Testis (tissue), 5 donors: ENCODE measurements at regions of chr14 and their contacts with region 1.

Region 1: DNA sequence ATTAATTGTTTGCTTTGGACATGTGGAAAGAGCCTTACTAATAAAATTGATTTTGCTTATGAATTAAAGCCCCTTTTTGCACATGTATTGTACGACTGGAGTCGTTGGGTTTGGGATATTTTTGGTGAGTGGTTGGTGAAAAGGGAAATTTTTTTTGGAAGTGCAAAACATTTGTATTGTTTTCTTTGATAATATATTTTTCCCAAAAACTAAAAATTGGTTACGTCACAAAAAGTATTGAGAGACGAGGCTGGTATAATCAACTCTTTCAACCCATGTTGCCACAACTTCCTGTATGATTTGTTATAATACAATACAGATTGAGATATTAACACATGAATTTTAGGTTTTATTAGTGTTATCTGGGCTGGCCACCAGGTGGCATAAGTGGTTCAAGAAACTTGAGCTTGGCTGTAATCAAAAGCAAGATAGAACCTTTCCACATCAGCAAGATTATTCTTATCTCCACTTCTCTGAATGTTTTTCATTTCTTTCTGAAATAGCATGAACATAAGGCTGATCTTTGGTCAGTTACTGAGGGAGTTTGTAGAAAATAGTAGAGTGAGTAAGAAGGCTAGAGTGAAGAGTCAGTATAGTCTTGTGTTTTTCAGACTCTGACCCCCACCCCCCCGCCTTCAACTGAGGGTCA is 8.7 kb downstream of the NGDN start:
- DNase-seq: peak; percentile 68
- H3K4me3 ChIP-seq: no peak overlapping the region
- H3K27ac ChIP-seq: no peak overlapping the region
- H3K4me1 ChIP-seq: no peaks in the 10 kb centered on the region
- H3K27me3 ChIP-seq: no peaks in the 10 kb centered on the region
- CTCF ChIP-seq: peak; percentile 73 to 83 (median 73)
- POLR2A ChIP-seq: no peak

Region 2: DNA sequence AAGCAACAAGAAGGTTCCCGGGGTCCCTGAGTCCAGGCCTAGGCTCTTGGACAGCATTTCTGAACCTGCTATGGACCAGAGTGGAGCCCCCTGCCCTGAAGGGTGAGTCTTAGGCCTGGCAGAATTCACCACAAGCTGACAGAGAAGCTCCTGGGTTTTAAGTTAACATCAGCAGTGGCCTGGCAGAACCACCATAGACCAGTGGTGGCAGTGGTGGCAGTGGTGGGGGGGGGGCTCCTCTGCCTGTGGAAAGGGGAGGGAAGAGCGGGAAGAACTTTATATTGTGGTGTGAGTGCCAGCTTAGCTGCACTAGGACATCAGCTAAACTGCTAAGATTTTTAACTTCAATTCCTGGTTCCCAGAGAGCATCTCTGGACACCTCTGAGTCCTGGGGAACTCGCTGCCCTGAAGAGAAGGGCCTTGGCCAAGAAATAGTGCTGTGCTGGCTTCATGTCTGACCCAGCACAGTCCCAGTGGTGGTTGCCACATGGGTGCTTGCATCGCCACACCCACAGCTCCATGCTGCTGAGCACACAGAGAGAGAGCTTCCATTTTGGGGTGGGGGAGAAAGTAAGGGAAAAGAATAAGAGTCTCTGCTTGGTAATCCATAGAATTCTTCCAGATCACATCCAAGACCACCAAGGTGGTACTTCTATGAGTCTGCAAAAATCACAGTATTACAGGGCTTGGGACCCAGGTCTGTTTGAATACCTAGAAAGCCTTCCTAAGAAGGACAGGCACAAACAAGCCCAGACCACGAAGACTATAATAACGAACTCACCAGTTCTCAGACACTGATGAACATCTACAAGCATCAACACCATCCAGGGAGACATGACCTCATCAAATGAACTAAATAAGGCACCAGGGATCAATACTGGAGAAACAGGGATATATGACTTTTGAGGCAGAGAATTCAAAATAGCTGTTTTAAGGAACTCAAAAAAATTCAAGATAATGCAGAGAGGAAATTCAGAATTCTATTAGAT is 260.9 kb before region 1 on chr14:
- intact Hi-C with region 1: no loop called
- DNase-seq: no peak
- H3K4me3 ChIP-seq: no peak overlapping the region
- H3K27ac ChIP-seq: no peak overlapping the region
- H3K4me1 ChIP-seq: no peaks in the 10 kb centered on the region
- H3K27me3 ChIP-seq: no peaks in the 10 kb centered on the region
- CTCF ChIP-seq: no peak
- POLR2A ChIP-seq: no peak

Region 3: GRCh38 chr14:23562268-23563203 is 84.3 kb after region 1 on chr14:
- intact Hi-C with region 1: loop called (anchors 5 kb)
- DNase-seq: peak; percentile 58
- H3K4me3 ChIP-seq: no peak overlapping the region
- H3K27ac ChIP-seq: no peak overlapping the region
- H3K4me1 ChIP-seq: peaks cover 4% of the 10 kb centered on the region
- H3K27me3 ChIP-seq: no peaks in the 10 kb centered on the region
- CTCF ChIP-seq: peak; percentile 77 to 94 (median 83)
- POLR2A ChIP-seq: no peak